ENCODE measurements at regions of chr9 and their contacts with region 1.

Region 1: GRCh38 chr9:9002826-9003583 is 1203.4 kb upstream of the DMAC1 start:
- DNase-seq: peak in 5 of 10 donors; percentile 5 to 69 (median 33)
- H3K4me3 ChIP-seq: no peak overlapping the region
- H3K27ac ChIP-seq: peak overlapping the region in 40 of 59 donors; percentile 1 to 77 (median 50)
- H3K27me3 ChIP-seq: no peaks in the 10 kb centered on the region
- CTCF ChIP-seq: peak in 53 of 56 donors; percentile 15 to 79 (median 52)

Region 2: DNA sequence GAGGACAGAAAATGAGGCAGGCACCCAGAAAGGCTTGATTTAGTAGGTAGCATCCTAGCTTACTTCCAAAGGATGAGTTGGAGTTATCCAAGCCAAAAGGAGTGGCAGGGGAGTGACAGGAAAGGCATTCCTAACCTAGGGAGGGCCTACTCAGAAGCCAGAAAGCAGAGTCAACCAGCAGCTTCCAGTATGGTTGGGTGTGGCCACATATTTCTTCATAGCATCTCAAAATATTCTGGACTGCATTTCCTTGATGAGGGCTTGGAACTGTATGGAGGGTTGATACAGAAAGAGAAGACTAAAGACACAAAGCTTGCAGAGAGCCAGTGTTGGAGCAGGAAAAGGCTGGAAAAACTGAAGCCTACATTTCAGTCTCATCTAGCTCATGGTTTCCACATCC is 546.7 kb before region 1 on chr9:
- intact Hi-C with region 1: no loop called
- DNase-seq: no peak
- H3K4me3 ChIP-seq: no peak overlapping the region
- H3K27ac ChIP-seq: peak overlapping the region in 32 of 59 donors; percentile 6 to 89 (median 39)
- H3K27me3 ChIP-seq: no peaks in the 10 kb centered on the region
- CTCF ChIP-seq: no peak

Region 3: GRCh38 chr9:8895861-8896224 is 107.2 kb before region 1 on chr9:
- intact Hi-C with region 1: loop called (anchors 2 to 5 kb)
- DNase-seq: no peak
- H3K4me3 ChIP-seq: peak overlapping the region in 52 of 59 donors; percentile 6 to 64 (median 33)
- H3K27ac ChIP-seq: peak overlapping the region in 54 of 59 donors; percentile 5 to 92 (median 75)
- H3K27me3 ChIP-seq: no peaks in the 10 kb centered on the region
- CTCF ChIP-seq: peak; percentile 26 to 90 (median 74)

Region 4: GRCh38 chr9:8940650-8941049 is 62.4 kb before region 1 on chr9:
- intact Hi-C with region 1: no loop called
- DNase-seq: no peak
- H3K4me3 ChIP-seq: no peak overlapping the region
- H3K27ac ChIP-seq: no peak overlapping the region
- H3K27me3 ChIP-seq: no peaks in the 10 kb centered on the region
- CTCF ChIP-seq: no peak

Measured in dorsolateral prefrontal cortex (tissue), 120 donors.